Dendritic cell treated with granulocyte-macrophage colony-stimulating factor and Interleukin-4, amounts not matched to agents 40 ng/mL and 50 ng/mL, for 4 days (primary cell): ENCODE measurements at regions of chr12 and their contacts with region 1.

Region 1: DNA sequence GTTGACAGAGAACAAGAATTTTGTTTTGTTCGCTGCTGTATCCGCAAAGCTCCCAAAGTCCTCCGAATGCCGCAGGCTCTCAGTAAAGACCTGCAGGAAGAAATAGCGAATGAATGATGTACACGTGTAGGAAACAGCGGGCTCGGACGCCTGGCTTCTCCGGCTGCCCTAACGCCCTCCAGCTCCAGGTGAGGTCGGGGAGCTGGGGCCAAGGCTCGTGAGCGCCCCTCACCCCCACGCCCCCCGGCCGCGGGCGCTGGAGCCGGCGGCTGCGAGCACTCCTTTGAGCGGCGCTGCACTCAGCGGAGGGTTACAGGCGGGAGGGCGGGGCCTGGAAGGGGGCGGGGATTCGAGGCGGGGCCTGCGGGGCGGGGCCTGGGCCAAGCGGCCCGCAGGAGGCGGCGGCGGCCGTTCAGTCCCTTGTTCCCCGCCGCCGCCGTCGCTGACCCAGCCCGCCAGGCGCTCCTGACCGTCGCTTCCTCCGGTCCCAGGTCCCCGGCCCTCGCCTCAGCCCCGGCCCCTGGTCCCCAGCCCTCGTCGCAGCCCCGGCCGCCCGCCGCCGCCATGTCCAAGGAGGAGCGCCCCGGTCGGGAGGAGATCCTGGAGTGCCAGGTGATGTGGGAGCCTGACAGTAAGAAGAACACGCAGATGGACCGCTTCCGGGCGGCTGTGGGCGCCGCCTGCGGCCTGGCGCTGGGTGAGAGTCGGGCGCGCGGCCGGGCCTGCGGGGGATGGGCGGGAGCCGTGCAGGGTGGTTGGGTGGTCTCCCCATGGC is at the start of gene AACS:
- H3K4me3 Mint-ChIP-seq: peak within 1 kb of the TSS; percentile 82
- H3K27ac Mint-ChIP-seq: peak within 1 kb of the TSS; percentile 50
- H3K4me1 Mint-ChIP-seq: peaks cover 27% of the 10 kb centered on the region
- H3K27me3 Mint-ChIP-seq: peaks cover 32% of the 10 kb centered on the region

Region 2: GRCh38 chr12:124779161-124780141 is 285.8 kb before region 1 on chr12:
- intact Hi-C with region 1: no loop called
- H3K4me3 Mint-ChIP-seq: no peak overlapping the region
- H3K27ac Mint-ChIP-seq: no peak overlapping the region
- H3K4me1 Mint-ChIP-seq: peaks cover 57% of the 10 kb centered on the region
- H3K27me3 Mint-ChIP-seq: no peaks in the 10 kb centered on the region

Region 3: GRCh38 chr12:124992874-124993625 is 72.2 kb before region 1 on chr12:
- intact Hi-C with region 1: loop called (anchors 5 kb)
- H3K4me3 Mint-ChIP-seq: peak overlapping the region; percentile 70
- H3K27ac Mint-ChIP-seq: peak overlapping the region; percentile 60
- H3K4me1 Mint-ChIP-seq: peaks cover 40% of the 10 kb centered on the region
- H3K27me3 Mint-ChIP-seq: no peaks in the 10 kb centered on the region